ENCODE measurements at regions of chr2 and their contacts with region 1.

Region 1: GRCh38 chr2:204325468-204325867 is 219.8 kb upstream of the PARD3B start:
- DNase-seq: peak; percentile 63
- H3K4me3 Mint-ChIP-seq: no peak overlapping the region
- H3K27ac Mint-ChIP-seq: no peak overlapping the region
- H3K4me1 Mint-ChIP-seq: no peaks in the 10 kb centered on the region
- H3K27me3 Mint-ChIP-seq: peaks cover 4% of the 10 kb centered on the region

Region 2: DNA sequence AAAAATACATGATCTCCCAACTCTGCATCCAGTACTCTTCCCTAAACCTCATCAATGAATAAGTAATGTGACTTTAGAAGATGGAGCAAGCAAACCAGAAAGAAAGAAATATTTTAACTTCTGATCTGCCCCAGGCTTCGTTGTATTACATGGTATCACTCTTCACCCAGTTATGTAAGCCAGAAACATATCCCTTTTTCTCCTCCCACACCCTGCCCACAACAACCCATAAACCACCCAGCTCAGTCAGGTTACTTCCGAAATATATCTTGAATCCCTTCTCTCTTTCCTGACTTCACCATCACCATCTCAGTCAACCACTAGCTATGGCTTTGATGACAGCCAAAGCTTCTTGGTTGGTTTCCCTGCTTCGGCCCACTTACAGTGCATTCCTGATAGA is 76.0 kb before region 1 on chr2:
- CTCF ChIA-PET with region 1: no interaction called
- POLR2A ChIA-PET with region 1: no interaction called
- intact Hi-C with region 1: no loop called
- DNase-seq: no peak
- H3K4me3 Mint-ChIP-seq: no peak overlapping the region
- H3K27ac Mint-ChIP-seq: no peak overlapping the region
- H3K4me1 Mint-ChIP-seq: no peaks in the 10 kb centered on the region
- H3K27me3 Mint-ChIP-seq: peaks cover 14% of the 10 kb centered on the region

Region 3: DNA sequence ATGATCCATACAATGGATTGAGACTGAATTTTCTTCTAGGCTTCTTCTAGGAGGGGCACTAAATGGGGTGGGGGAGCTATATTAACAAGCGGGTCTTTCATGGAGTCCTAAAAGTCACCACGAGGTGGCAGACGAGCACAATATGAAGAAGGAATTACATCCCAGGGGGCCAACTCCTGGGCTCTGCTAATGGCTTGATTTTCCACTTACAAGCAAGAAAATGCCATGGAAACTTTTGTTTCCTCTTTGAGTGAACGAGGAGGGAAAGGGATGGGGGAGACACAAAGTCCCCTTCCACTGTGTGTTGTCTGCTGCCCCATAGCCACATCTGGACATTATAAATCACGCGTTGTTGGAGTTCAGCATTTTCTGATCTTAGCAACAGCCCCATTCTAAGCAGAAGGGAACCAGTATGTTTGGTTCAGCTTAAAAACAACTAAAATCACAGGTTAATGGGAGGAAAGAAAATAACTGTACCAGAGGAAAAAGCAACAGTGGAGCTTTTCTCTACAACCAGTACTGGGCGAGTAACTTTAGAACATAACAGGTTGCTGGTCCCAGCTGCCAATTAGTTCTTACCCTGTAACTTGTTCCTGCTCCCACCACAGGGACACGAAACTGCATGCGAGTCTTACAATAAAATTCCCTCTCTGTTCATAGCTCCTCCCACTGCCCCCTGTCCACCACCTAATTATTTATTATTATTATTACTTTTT is 65.1 kb before region 1 on chr2:
- CTCF ChIA-PET with region 1: no interaction called
- POLR2A ChIA-PET with region 1: no interaction called
- intact Hi-C with region 1: loop called (anchors 2 kb)
- DNase-seq: peak; percentile 53
- H3K4me3 Mint-ChIP-seq: no peak overlapping the region
- H3K27ac Mint-ChIP-seq: no peak overlapping the region
- H3K4me1 Mint-ChIP-seq: no peaks in the 10 kb centered on the region
- H3K27me3 Mint-ChIP-seq: peaks cover 29% of the 10 kb centered on the region

Region 4: DNA sequence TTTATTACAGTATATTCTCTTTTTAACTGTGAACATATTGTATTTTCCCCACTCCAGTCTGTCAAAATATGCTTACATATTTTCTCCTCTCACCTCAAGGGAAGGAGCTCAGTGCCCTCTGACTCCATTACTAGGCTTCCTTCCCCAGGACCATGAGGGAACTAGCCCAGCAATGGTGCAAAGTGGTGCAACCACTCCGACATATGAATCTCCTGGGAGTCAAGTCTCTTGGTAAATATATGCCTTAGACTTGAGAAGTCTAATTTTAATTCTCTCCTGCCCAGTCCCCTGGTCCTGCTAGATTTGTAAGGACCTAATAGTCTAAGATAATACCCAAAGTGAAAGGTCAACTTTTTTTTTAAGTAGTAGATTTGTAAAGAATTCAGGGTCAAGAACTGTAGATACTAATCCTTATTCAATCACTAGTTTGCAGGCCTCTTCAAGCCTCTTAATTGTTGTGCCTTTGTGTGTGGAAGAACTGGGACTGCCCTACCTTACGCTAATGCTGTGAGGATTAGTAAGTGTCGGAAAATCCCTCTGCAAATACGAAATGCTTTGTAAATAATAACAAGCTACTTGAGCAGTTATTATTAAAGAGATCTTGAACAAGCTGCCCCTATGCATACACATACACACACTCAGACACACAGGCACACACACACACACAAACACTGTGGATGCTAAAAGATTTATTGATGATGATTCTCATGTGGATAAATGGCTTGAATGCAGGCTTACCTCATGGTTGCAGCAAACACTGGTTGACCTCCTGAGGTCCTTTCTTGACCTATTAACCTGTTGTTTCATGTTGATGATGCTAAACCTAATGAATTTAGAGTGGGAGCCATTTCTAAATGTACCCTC is 31.4 kb before region 1 on chr2:
- CTCF ChIA-PET with region 1: no interaction called
- POLR2A ChIA-PET with region 1: no interaction called
- intact Hi-C with region 1: loop called (anchors 1 kb)
- DNase-seq: no peak
- H3K4me3 Mint-ChIP-seq: no peak overlapping the region
- H3K27ac Mint-ChIP-seq: no peak overlapping the region
- H3K4me1 Mint-ChIP-seq: no peaks in the 10 kb centered on the region
- H3K27me3 Mint-ChIP-seq: peaks cover 12% of the 10 kb centered on the region

Region 5: DNA sequence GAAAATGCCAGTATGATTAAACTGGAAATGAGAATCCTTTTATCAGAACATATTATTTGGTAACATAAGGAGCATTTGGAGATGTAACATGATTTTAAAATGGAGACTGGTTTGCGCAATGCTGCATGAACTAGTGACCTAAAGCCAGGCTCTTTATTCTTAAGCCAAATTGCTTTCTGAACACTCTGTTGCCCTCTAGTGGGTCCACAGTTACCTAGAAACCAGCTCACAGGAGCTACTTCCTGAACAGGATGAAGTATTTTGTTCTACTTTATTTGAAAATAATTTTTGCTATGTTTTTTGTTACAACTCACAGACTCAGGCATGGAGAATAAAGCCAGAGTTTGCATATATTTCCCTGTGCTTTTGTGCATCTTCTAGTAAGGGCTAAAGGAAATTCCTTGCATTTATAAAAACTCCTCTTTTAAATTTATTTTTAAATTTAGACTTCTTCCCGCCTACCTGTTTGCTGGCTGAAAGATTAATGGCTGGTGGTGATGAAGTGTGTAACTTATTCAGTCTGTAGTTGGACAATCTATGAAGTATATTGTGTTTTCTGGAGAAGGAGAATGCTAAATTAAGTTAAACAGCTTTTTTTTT is 366.5 kb after region 1 on chr2:
- CTCF ChIA-PET with region 1: interaction called, 11 read pairs
- POLR2A ChIA-PET with region 1: no interaction called
- intact Hi-C with region 1: loop called (anchors 1 kb)
- DNase-seq: peak; percentile 18
- H3K4me3 Mint-ChIP-seq: no peak overlapping the region
- H3K27ac Mint-ChIP-seq: no peak overlapping the region
- H3K4me1 Mint-ChIP-seq: peaks cover 9% of the 10 kb centered on the region
- H3K27me3 Mint-ChIP-seq: peaks cover 2% of the 10 kb centered on the region

Region 6: GRCh38 chr2:204842661-204843485 is 517.4 kb after region 1 on chr2:
- CTCF ChIA-PET with region 1: no interaction called
- POLR2A ChIA-PET with region 1: no interaction called
- intact Hi-C with region 1: loop called (anchors 10 kb)
- DNase-seq: peak; percentile 63
- H3K4me3 Mint-ChIP-seq: no peak overlapping the region
- H3K27ac Mint-ChIP-seq: peak overlapping the region; percentile 49
- H3K4me1 Mint-ChIP-seq: peaks cover 16% of the 10 kb centered on the region
- H3K27me3 Mint-ChIP-seq: peaks cover 2% of the 10 kb centered on the region

Region 7: DNA sequence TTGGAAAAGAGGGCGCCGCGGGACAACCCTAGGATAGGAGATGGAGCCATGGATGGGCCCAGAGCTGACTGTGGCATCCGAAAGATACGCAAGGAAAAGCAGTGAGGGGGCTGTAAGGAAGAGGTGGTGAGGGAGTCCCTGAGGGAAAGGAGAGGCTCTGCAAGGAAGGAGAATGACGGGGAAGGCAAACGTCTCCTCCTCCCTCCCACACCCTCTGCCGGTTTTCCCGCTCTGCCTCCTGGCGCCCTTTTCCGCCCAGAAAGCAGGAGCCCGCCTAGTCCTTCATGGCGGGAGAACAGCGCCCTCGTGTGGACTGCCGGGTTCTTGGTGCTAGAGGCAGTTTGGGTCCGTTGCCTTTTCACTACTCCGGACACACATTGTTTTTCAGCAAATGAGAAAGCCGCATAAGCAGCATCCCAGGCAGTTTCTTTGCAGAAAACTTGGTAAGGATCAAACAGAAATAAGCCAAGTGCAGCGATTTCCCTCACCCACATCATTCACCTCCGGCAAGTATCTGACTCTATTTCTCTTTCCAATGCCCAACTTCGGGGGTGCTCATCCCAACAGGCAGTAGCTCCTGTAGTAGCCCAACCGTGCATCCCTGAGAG is 1560.1 kb after region 1 on chr2:
- CTCF ChIA-PET with region 1: no interaction called
- POLR2A ChIA-PET with region 1: no interaction called
- intact Hi-C with region 1: loop called (anchors 1 kb)
- DNase-seq: peak; percentile 81
- H3K4me3 Mint-ChIP-seq: no peak overlapping the region
- H3K27ac Mint-ChIP-seq: no peak overlapping the region
- H3K4me1 Mint-ChIP-seq: no peaks in the 10 kb centered on the region
- H3K27me3 Mint-ChIP-seq: peaks cover 15% of the 10 kb centered on the region

Measured in activated CD4-positive, alpha-beta memory T cell treated with anti-CD3 and anti-CD28 coated beads for 36 hours (primary cell).